ENCODE measurements at regions of chr9 and their contacts with region 1.

Region 1: GRCh38 chr9:129944506-129945116 is 98.4 kb downstream of the FNBP1 start:
- DNase-seq: peak; percentile 81
- H3K4me3 Mint-ChIP-seq: no peak overlapping the region
- H3K27ac Mint-ChIP-seq: peak overlapping the region; percentile 82
- H3K4me1 Mint-ChIP-seq: peaks cover 48% of the 10 kb centered on the region
- H3K27me3 Mint-ChIP-seq: no peaks in the 10 kb centered on the region

Region 2: GRCh38 chr9:129932303-129933151 is 12.1 kb before region 1 on chr9:
- CTCF ChIA-PET with region 1: interaction called, 5 read pairs
- intact Hi-C with region 1: loop called (anchors 1 kb)
- DNase-seq: no peak
- H3K4me3 Mint-ChIP-seq: peak overlapping the region; percentile 25
- H3K27ac Mint-ChIP-seq: peak overlapping the region; percentile 84
- H3K4me1 Mint-ChIP-seq: peaks cover 50% of the 10 kb centered on the region
- H3K27me3 Mint-ChIP-seq: no peaks in the 10 kb centered on the region

Region 3: DNA sequence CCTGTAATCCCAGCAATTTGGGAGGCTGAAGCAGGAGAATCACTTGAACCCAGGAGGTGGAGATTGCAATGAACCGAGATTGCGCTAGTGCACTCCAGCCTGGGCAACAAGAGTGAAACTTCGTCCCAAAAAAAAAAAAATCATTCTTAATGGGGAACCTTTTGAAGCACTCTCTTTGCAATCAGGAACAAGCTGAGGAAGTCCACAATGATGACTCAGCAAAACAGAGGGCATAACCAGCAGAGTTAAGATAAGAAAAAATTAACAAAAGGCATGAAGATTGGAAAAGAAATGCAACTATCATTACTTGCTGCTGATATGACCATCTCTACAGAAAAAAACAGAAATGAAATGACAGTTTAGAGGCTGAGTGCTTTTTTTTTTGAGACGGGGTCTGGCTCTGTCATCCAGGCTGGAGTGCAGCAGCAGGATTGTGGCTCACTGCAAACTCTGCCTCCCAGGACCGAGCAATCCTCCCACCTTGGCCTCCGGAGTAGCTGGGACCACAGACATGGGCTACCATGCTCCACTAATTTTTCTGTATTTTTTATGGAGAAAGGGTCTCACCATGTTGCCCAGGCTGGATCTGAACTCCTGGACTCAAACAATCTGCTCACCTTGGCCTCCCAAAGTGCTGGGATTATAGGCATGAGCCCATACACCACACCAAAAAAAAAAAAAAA is 10.4 kb after region 1 on chr9:
- CTCF ChIA-PET with region 1: interaction called, 6 read pairs
- intact Hi-C with region 1: loop called (anchors 1 kb)
- DNase-seq: no peak
- H3K4me3 Mint-ChIP-seq: no peak overlapping the region
- H3K27ac Mint-ChIP-seq: peak overlapping the region; percentile 13
- H3K4me1 Mint-ChIP-seq: peaks cover 49% of the 10 kb centered on the region
- H3K27me3 Mint-ChIP-seq: no peaks in the 10 kb centered on the region

Measured in activated naive CD4-positive, alpha-beta T cell treated with anti-CD3 and anti-CD28 coated beads for 36 hours (primary cell).